ENCODE measurements at regions of chr18 and their contacts with region 1.

Region 1: GRCh38 chr18:9614401-9615279 is at the start of gene PPP4R1:
- DNase-seq: peak; percentile 36 to 81 (median 66)
- ATAC-seq: peak; percentile 67
- H3K4me3 ChIP-seq: peak within 1 kb of the TSS; percentile 64 to 76
- H3K4me3 Mint-ChIP-seq: peak within 1 kb of the TSS; percentile 94
- H3K27ac ChIP-seq: peak within 1 kb of the TSS; percentile 4 to 63
- H3K27ac Mint-ChIP-seq: peak within 1 kb of the TSS; percentile 90
- H3K4me1 ChIP-seq: peaks cover 20% of the 10 kb centered on the region
- H3K4me1 Mint-ChIP-seq: peaks cover 36% of the 10 kb centered on the region
- H3K27me3 ChIP-seq: no peaks in the 10 kb centered on the region
- H3K27me3 Mint-ChIP-seq: no peaks in the 10 kb centered on the region
- CTCF ChIP-seq: no peak
- total RNA-seq, gene PPP4R1: 35.1 to 40.1 TPM

Region 2: DNA sequence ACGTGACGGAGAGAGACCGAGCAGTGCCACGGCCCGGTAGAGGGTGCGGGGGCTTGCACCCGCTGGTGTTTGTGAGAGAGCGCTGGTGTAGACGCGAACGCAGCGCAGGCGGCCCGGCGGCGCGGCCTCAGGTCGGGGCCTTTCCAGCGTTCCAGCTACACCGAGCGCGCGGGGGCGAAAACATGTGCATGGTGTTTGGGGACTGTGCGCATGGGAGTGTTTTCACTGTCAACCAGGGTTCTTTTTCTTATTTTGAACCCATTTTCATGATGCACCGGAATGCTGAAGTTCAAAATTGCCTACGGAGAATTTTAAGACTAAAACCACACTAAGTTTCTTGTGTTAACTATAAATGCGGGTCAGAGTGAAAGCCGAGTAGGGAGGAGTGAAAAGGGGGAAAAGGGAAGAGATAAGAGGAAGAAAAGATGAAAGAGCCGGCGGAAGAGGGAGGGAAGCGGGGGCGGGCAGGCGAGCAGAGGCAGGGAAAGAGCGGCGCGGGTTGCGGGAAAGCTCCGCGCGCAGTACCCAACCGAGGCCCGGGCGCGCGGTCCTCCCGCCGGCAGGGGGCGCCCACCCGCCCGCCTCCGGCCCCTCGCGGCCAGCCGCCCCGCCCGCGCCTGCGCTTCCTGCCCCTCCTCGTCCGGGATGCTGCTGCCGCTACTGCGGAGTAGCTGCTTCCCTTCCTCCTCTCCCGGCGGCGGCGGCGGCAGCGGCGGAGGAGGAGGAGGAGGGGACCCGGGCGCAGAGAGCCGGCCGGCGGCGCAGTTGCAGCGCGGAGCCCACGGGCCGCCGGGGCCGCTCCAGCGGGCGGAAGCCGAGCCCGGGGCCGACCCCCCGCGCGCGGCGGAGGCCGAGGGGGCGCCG is 1005.6 kb before region 1 on chr18 and contains the start of gene RAB12:
- CTCF ChIA-PET with region 1: no interaction called
- POLR2A ChIA-PET with region 1: no interaction called
- intact Hi-C with region 1: loop called (anchors 2 to 5 kb)
- DNase-seq: peak; percentile 72 to 93 (median 88)
- ATAC-seq: peak; percentile 92
- H3K4me3 ChIP-seq: peak within 1 kb of the TSS; percentile 64 to 70
- H3K4me3 Mint-ChIP-seq: peak within 1 kb of the TSS; percentile 90
- H3K27ac ChIP-seq: peak within 1 kb of the TSS; percentile 53 to 70
- H3K27ac Mint-ChIP-seq: peak within 1 kb of the TSS; percentile 90
- H3K4me1 ChIP-seq: peaks cover 42% of the 10 kb centered on the region
- H3K4me1 Mint-ChIP-seq: peaks cover 50% of the 10 kb centered on the region
- H3K27me3 ChIP-seq: no peaks in the 10 kb centered on the region
- H3K27me3 Mint-ChIP-seq: no peaks in the 10 kb centered on the region
- CTCF ChIP-seq: peak; percentile 70
- total RNA-seq, gene RAB12: 20.2 to 20.9 TPM

Region 3: DNA sequence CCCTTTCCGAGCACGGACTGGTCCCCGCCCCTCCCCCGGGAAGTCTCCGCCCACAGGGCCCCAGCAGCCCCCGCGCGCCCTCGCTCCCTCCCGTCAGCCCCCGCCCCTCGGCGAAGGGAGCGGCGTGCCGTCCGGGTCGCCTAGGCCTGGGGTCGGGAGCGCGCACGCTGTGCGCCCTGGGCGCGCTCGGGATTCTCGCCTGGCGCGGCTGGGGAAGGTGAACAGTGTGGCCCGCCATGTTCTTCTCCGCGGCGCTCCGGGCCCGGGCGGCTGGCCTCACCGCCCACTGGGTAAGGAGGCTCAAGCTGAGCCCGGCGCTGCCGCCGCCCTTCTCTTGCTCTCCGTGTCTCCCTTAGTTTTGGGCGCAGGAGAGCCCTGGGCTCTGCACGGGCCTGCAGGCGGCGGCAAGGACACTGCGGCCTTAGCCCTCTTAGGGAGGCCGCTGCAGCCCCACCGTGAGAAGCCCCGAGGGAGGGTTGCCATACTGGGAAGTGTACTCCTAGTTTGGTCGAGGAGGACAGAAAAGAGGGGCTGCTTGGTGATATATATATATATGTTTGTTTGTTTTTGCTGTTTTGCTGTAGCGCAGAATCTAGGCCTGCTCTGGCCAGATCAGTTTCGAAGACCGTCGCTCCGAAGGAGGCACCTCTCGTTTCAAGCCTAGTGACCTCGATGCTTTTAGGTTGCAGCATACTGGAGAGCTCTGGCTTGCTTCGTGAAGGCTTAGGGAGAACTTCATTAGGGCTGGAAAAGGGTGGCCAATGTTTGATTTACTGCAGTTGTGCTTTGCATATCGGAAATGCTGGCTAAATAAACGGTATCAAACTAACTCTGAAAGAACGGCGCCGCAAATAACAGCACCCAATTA is 511.9 kb before region 1 on chr18 and contains the start of gene NDUFV2:
- CTCF ChIA-PET with region 1: no interaction called
- POLR2A ChIA-PET with region 1: no interaction called
- intact Hi-C with region 1: loop called (anchors 5 to 10 kb)
- DNase-seq: peak; percentile 96 to 99 (median 98)
- ATAC-seq: peak; percentile 95
- H3K4me3 ChIP-seq: peak within 1 kb of the TSS; percentile 55 to 82
- H3K4me3 Mint-ChIP-seq: peak within 1 kb of the TSS; percentile 89
- H3K27ac ChIP-seq: peak within 1 kb of the TSS; percentile 69 to 87
- H3K27ac Mint-ChIP-seq: peak within 1 kb of the TSS; percentile 94
- H3K4me1 ChIP-seq: peaks cover 46% of the 10 kb centered on the region
- H3K4me1 Mint-ChIP-seq: peaks cover 60% of the 10 kb centered on the region
- H3K27me3 ChIP-seq: no peaks in the 10 kb centered on the region
- H3K27me3 Mint-ChIP-seq: no peaks in the 10 kb centered on the region
- CTCF ChIP-seq: no peak
- total RNA-seq, gene NDUFV2: 229 to 249 TPM

Region 4: GRCh38 chr18:9474983-9475642 is 139.5 kb before region 1 on chr18 and contains the start of gene RALBP1:
- CTCF ChIA-PET with region 1: no interaction called
- POLR2A ChIA-PET with region 1: no interaction called
- intact Hi-C with region 1: loop called (anchors 1 to 5 kb)
- DNase-seq: peak; percentile 96 to 99 (median 97)
- ATAC-seq: peak; percentile 98
- H3K4me3 ChIP-seq: peak within 1 kb of the TSS; percentile 90 to 93
- H3K4me3 Mint-ChIP-seq: peak within 1 kb of the TSS; percentile 98
- H3K27ac ChIP-seq: peak within 1 kb of the TSS; percentile 67 to 86
- H3K27ac Mint-ChIP-seq: peak within 1 kb of the TSS; percentile 97
- H3K4me1 ChIP-seq: peaks cover 9% of the 10 kb centered on the region
- H3K4me1 Mint-ChIP-seq: peaks cover 38% of the 10 kb centered on the region
- H3K27me3 ChIP-seq: no peaks in the 10 kb centered on the region
- H3K27me3 Mint-ChIP-seq: peaks cover 5% of the 10 kb centered on the region
- CTCF ChIP-seq: no peak
- total RNA-seq, gene RALBP1: 5.4 to 7.9 TPM

Region 5: GRCh38 chr18:9673296-9674251 is 58.9 kb after region 1 on chr18:
- CTCF ChIA-PET with region 1: interaction called, 5 read pairs
- POLR2A ChIA-PET with region 1: no interaction called
- intact Hi-C with region 1: loop called in 1 of 2 experiments (anchors 2 kb)
- DNase-seq: peak in 2 of 9 experiments; percentile 30 to 47
- ATAC-seq: peak; percentile 58
- H3K4me3 ChIP-seq: no peak overlapping the region
- H3K4me3 Mint-ChIP-seq: no peak overlapping the region
- H3K27ac ChIP-seq: no peak overlapping the region
- H3K27ac Mint-ChIP-seq: no peak overlapping the region
- H3K4me1 ChIP-seq: peaks cover 5% of the 10 kb centered on the region
- H3K4me1 Mint-ChIP-seq: peaks cover 3% of the 10 kb centered on the region
- H3K27me3 ChIP-seq: peaks cover 0 to 3% of the 10 kb centered on the region in 2 experiments
- H3K27me3 Mint-ChIP-seq: peaks cover 7% of the 10 kb centered on the region
- CTCF ChIP-seq: no peak

Region 6: DNA sequence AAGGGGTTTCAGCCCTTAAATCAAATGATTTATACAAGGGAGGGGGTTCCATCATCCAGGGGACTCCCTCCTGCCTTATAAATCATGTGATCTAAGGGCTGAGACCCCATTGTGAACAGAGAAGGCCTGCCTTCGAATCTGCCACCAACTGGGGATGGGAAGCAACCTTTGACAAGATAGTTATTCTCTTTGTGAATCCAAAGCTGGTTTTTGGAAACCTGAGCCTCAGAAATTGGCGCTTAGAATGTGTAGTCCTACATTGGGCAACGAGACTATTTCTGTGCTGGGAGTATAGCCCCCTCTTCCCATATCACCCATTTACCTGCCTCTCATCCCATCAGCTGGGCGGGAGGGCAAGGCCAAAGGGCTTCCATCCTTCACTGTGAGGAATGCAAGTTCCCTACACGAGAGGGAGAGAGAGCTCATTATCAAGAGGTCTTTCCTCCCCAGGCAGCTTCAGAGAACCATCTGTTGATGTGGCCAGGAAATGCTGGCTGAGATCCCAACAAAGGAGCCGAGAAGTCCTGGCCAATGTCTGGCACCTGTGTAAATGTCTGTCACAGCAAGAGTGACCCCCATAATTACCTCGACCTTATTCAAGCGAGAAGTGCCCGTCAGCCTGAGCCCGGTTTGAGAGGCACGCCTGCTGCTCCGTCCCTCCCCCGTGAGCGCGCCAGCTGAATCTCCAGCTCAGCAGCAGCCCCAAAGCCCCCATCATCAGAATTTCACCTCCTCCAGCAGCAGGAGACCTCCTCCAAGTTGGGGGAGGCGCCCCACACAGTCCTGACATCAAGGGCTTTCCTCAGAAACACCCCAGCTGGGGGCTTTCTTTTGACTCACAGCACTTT is 791.4 kb after region 1 on chr18:
- CTCF ChIA-PET with region 1: no interaction called
- POLR2A ChIA-PET with region 1: no interaction called
- intact Hi-C with region 1: no loop called
- DNase-seq: no peak
- ATAC-seq: no peak
- H3K4me3 ChIP-seq: no peak overlapping the region
- H3K4me3 Mint-ChIP-seq: no peak overlapping the region
- H3K27ac ChIP-seq: no peak overlapping the region
- H3K27ac Mint-ChIP-seq: no peak overlapping the region
- H3K4me1 ChIP-seq: no peaks in the 10 kb centered on the region
- H3K4me1 Mint-ChIP-seq: no peaks in the 10 kb centered on the region
- H3K27me3 ChIP-seq: no peaks in the 10 kb centered on the region
- H3K27me3 Mint-ChIP-seq: no peaks in the 10 kb centered on the region
- CTCF ChIP-seq: no peak

Region 7: GRCh38 chr18:10525371-10526210 is 911.0 kb after region 1 on chr18 and contains the start of gene NAPG:
- CTCF ChIA-PET with region 1: no interaction called
- POLR2A ChIA-PET with region 1: no interaction called
- intact Hi-C with region 1: loop called (anchors 2 to 5 kb)
- DNase-seq: peak; percentile 78 to 97 (median 88)
- ATAC-seq: peak; percentile 86
- H3K4me3 ChIP-seq: peak within 1 kb of the TSS; percentile 90 to 98
- H3K4me3 Mint-ChIP-seq: peak within 1 kb of the TSS; percentile 97
- H3K27ac ChIP-seq: peak within 1 kb of the TSS; percentile 75 to 87
- H3K27ac Mint-ChIP-seq: peak within 1 kb of the TSS; percentile 96
- H3K4me1 ChIP-seq: peaks cover 31% of the 10 kb centered on the region
- H3K4me1 Mint-ChIP-seq: peaks cover 50% of the 10 kb centered on the region
- H3K27me3 ChIP-seq: no peaks in the 10 kb centered on the region
- H3K27me3 Mint-ChIP-seq: no peaks in the 10 kb centered on the region
- CTCF ChIP-seq: no peak
- total RNA-seq, gene NAPG: 33.2 to 35.8 TPM